Activated CD4-positive, alpha-beta T cell treated with anti-CD3 and anti-CD28 coated beads, Interleukin-2, amount 10 ng/mL, durations not matched to agents 24 days and 14 days (primary cell): ENCODE measurements at regions of chr1 and their contacts with region 1.

Region 1: DNA sequence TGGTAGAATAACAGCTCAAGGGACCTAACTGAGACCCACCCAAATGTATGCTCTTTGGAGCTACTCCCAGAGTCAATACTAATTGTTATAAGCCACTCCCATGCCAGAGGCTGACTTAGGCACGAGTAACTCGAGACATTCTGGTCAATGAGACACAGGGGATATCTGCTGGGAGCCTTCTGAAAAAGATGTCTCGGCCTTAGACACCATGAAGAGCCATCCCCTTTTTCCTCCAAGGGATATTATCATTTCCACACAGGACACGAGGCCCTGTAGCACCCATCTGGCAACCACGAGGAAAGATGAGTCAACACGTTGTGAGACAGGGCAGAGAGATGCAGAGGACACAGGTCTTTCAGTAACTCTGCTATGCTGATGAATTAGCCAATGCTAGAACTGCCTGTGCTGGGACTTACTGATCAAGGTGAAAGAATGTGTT is 30.7 kb downstream of the ITPKB start:
- DNase-seq: no peak
- H3K4me3 Mint-ChIP-seq: peak overlapping the region; percentile 71
- H3K27ac Mint-ChIP-seq: peak overlapping the region; percentile 93
- H3K4me1 Mint-ChIP-seq: peaks cover 69% of the 10 kb centered on the region
- H3K27me3 Mint-ChIP-seq: no peaks in the 10 kb centered on the region

Region 2: GRCh38 chr1:226634166-226634588 is 74.2 kb before region 1 on chr1:
- intact Hi-C with region 1: loop called (anchors 2 kb)
- DNase-seq: peak; percentile 93
- H3K4me3 Mint-ChIP-seq: peak overlapping the region; percentile 33
- H3K27ac Mint-ChIP-seq: peak overlapping the region; percentile 5
- H3K4me1 Mint-ChIP-seq: peaks cover 40% of the 10 kb centered on the region
- H3K27me3 Mint-ChIP-seq: no peaks in the 10 kb centered on the region